ENCODE measurements at regions of chr1 and their contacts with region 1.

Region 1: GRCh38 chr1:167617153-167618147 is 12.6 kb upstream of the RCSD1 start:
- DNase-seq: peak in 1 of 2 donors; percentile 54
- ATAC-seq: peak; percentile 74 to 91 (median 88)
- H3K4me3 ChIP-seq: peak overlapping the region in 6 of 10 donors; percentile 4 to 32 (median 17)
- H3K27ac ChIP-seq: peak overlapping the region; percentile 41 to 89 (median 68)
- H3K4me1 ChIP-seq: peaks cover 0 to 62% (median 22%) of the 10 kb centered on the region in 9 donors
- H3K27me3 ChIP-seq: no peaks in the 10 kb centered on the region
- CTCF ChIP-seq: no peak

Region 2: DNA sequence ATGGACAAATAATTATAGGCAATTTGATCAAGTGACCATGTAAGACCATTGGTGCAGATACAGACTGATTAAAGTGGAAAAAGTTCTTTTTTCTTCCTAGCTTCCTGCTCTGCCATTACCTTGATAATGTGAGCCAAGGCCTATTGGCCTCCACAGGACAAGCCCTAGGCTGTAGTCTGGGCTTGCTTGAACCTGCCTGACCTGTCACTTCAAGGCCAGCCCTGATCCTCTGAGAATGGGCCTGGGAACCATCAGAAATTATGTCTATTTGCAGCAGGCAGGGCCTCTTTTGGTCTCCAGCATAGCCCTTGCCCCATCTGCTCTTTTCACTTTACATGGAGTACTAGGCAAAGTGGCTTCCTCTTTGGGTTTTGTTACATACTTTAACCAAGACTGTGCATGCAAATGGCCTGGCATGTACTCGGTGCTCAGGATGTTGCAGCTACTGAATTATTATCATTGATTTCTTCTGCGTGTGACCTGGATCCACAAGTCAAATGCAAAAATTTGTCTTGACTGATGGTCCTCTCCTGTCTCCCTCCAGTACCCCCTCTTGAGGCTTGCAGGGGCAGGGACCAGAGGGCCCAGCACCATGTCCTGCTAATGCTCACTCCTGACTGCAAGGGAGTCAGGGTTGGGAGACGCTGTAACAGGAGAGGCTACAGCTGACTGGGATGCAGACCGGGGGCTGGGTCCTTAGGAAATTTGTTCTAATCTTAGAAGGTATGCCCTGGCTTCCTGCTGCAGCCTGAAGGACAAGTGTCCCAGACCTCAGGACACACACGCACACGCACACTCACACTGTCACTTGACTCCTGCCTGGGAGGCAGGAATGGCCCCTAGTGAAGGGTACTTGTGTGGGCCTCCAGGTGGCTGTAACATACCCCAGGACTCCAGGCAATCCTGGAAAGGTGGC is 52.0 kb after region 1 on chr1:
- intact Hi-C with region 1: loop called in 1 of 10 experiments (anchors 5 kb)
- DNase-seq: no peak
- ATAC-seq: peak; percentile 21 to 82 (median 50)
- H3K4me3 ChIP-seq: no peak overlapping the region
- H3K27ac ChIP-seq: peak overlapping the region in 7 of 10 donors; percentile 9 to 87 (median 49)
- H3K4me1 ChIP-seq: peaks cover 8 to 77% (median 71%) of the 10 kb centered on the region in 9 donors
- H3K27me3 ChIP-seq: no peaks in the 10 kb centered on the region
- CTCF ChIP-seq: no peak

Region 3: GRCh38 chr1:168234846-168235547 is 617.5 kb after region 1 on chr1:
- intact Hi-C with region 1: no loop called
- DNase-seq: no peak
- ATAC-seq: peak in 5 of 8 donors; percentile 38 to 71 (median 57)
- H3K4me3 ChIP-seq: no peak overlapping the region
- H3K27ac ChIP-seq: no peak overlapping the region
- H3K4me1 ChIP-seq: peaks cover 0 to 35% (median 15%) of the 10 kb centered on the region in 9 donors
- H3K27me3 ChIP-seq: no peaks in the 10 kb centered on the region
- CTCF ChIP-seq: peak in 8 of 9 donors; percentile 9 to 65 (median 50)